Activated CD4-positive, alpha-beta T cell treated with anti-CD3 and anti-CD28 coated beads, Interleukin-2, amount 10 ng/mL, durations not matched to agents 24 days and 14 days (primary cell): ENCODE measurements at regions of chr1 and their contacts with region 1.

Region 1: GRCh38 chr1:26321315-26322041 is 3.7 kb downstream of the CD52 start:
- DNase-seq: peak; percentile 99
- H3K4me3 Mint-ChIP-seq: peak overlapping the region; percentile 82
- H3K27ac Mint-ChIP-seq: peak overlapping the region; percentile 96
- H3K4me1 Mint-ChIP-seq: peaks cover 40% of the 10 kb centered on the region
- H3K27me3 Mint-ChIP-seq: no peaks in the 10 kb centered on the region

Region 2: GRCh38 chr1:26169669-26170471 is 151.6 kb before region 1 on chr1 and contains the start of gene ZNF593:
- intact Hi-C with region 1: loop called (anchors 1 kb)
- DNase-seq: peak; percentile 97
- H3K4me3 Mint-ChIP-seq: peak within 1 kb of the TSS; percentile 96
- H3K27ac Mint-ChIP-seq: peak within 1 kb of the TSS; percentile 92
- H3K4me1 Mint-ChIP-seq: peaks cover 27% of the 10 kb centered on the region
- H3K27me3 Mint-ChIP-seq: peaks cover 9% of the 10 kb centered on the region
- total RNA-seq, gene ZNF593: 84.0 and 87.1 TPM in 2 replicates

Region 3: DNA sequence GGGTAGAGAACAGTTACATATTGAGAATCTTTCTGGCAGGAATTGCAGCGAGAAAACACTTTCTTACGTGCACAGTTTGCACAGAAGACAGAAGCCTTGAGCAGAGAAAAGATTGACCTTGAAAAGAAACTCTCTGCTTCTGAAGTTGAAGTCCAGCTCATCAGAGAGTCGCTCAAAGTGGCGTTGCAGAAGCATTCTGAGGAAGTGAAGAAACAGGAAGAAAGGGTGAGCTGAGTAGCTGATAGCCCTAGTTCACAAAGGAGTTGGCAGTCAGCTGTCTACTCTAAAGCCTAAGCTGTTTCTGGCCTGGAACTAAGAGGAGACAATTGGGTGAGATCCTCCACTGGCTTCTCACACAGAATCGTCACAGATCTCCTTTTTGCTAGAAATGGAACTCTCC is 61.9 kb before region 1 on chr1:
- intact Hi-C with region 1: no loop called
- DNase-seq: no peak
- H3K4me3 Mint-ChIP-seq: no peak overlapping the region
- H3K27ac Mint-ChIP-seq: no peak overlapping the region
- H3K4me1 Mint-ChIP-seq: peaks cover 2% of the 10 kb centered on the region
- H3K27me3 Mint-ChIP-seq: no peaks in the 10 kb centered on the region

Region 4: DNA sequence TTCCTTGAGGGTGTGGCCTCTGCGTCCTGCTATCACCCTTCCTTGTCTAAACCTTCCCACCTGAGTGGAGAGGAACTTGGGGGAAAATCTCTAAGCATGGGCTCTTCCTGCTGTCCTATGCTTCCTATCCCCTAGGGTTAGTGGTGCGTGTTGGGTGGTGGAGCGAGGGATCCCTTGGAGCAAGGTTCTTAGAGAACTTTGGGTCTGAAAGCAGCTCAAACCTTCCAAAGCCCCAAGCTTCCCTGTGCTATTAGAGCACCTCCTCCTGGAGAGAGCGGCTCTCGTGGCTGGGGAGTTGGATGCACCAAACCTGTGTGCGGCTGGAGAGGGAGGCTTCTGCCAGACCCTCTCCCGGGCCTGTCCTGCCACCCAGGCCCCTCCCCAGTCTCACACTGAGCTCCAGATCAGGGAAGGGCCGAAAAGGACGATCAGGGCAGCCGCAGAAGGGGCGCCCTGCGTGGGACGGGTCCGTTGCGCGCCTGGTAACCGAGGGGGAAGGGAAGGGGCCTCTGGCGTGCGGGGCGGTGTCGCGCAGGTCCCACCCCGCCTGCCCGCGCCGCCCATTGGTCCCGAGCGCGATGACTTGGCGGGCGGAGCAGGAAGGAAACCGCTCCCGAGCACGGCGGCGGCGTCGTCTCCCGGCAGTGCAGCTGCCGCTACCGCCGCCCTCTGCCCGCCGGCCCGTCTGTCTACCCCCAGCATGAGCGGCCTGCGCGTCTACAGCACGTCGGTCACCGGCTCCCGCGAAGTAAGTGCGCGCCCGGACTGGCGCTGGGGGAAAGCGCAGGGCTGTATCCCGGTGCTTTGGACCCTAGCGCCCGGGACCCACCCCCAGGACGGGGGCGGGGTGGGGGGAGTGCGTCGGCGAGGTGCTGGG is 41.8 kb before region 1 on chr1 and contains the start of gene SH3BGRL3:
- intact Hi-C with region 1: loop called (anchors 1 kb)
- DNase-seq: peak; percentile 97
- H3K4me3 Mint-ChIP-seq: peak within 1 kb of the TSS; percentile 96
- H3K27ac Mint-ChIP-seq: peak within 1 kb of the TSS; percentile 97
- H3K4me1 Mint-ChIP-seq: peaks cover 74% of the 10 kb centered on the region
- H3K27me3 Mint-ChIP-seq: no peaks in the 10 kb centered on the region
- total RNA-seq, gene SH3BGRL3: 463 and 474 TPM in 2 replicates

Region 5: GRCh38 chr1:26306290-26307229 is 14.9 kb before region 1 on chr1 and contains the start of gene UBXN11:
- intact Hi-C with region 1: loop called (anchors 1 kb)
- DNase-seq: peak; percentile 98
- H3K4me3 Mint-ChIP-seq: peak within 1 kb of the TSS; percentile 98
- H3K27ac Mint-ChIP-seq: peak within 1 kb of the TSS; percentile 93
- H3K4me1 Mint-ChIP-seq: peaks cover 30% of the 10 kb centered on the region
- H3K27me3 Mint-ChIP-seq: no peaks in the 10 kb centered on the region
- total RNA-seq, gene UBXN11: 17.1 and 19.0 TPM in 2 replicates

Region 6: GRCh38 chr1:26378088-26378878 is 56.8 kb after region 1 on chr1:
- intact Hi-C with region 1: no loop called
- DNase-seq: peak; percentile 94
- H3K4me3 Mint-ChIP-seq: peak overlapping the region; percentile 75
- H3K27ac Mint-ChIP-seq: peak overlapping the region; percentile 88
- H3K4me1 Mint-ChIP-seq: peaks cover 57% of the 10 kb centered on the region
- H3K27me3 Mint-ChIP-seq: no peaks in the 10 kb centered on the region

Region 7: GRCh38 chr1:26391450-26391849 is 70.0 kb after region 1 on chr1:
- intact Hi-C with region 1: loop called (anchors 5 kb)
- DNase-seq: peak; percentile 86
- H3K4me3 Mint-ChIP-seq: no peak overlapping the region
- H3K27ac Mint-ChIP-seq: no peak overlapping the region
- H3K4me1 Mint-ChIP-seq: peaks cover 41% of the 10 kb centered on the region
- H3K27me3 Mint-ChIP-seq: peaks cover 4% of the 10 kb centered on the region

Region 8: DNA sequence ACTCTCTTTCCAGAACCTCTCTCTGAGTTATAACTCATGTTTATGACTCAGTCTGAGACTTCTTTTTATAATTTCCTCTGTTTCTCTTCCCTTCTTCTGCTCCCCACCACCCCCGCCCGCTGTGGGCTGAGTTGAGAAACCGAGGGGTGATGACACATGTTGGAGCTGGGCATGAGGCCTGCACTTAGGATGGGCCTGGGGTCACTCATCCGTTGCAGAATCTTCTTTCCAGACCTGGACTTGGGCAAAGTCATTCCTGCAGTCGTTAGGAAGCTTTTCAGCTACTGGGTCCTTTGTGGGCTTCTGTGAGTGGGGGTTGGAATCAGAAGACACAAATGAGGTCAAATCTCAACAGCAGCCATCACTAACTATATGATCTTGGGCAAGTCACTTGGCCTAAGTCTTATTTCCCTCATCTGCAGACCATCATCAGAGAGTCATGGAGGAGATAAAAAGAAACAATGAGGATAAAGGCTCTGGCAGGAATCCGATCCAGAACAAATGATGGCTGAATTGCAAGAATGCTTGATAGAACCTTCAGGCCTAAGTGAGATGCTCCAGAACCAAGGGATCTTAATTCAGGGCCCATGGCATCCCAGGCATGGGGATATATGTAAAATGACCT is 261.5 kb after region 1 on chr1:
- intact Hi-C with region 1: loop called (anchors 2 kb)
- DNase-seq: peak; percentile 79
- H3K4me3 Mint-ChIP-seq: peak overlapping the region; percentile 47
- H3K27ac Mint-ChIP-seq: peak overlapping the region; percentile 92
- H3K4me1 Mint-ChIP-seq: peaks cover 48% of the 10 kb centered on the region
- H3K27me3 Mint-ChIP-seq: peaks cover 2% of the 10 kb centered on the region

Region 9: DNA sequence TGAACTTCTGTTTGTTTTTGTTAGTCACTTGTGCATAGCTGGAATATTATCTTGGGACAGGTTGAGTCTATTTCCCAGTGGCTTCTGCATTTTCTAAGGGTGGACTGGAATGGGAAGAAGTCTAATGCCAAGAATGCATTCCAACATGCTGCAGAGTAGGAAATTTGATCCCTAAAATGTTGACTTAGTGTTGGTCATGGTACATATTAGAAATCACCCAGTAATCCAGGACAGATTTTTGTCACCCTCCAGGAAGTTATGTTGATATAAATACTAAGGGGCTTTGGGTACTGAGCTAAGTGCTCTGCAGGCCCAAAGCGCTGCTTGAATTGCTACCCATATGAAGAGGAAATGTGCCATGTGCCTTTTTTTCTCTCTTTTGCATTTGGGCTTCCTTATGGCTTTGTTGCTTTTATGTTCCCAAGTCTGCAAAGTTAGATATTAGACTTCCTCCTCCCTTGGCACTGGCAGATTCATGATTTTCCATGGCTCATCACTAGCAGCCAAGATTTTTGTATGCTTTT is 384.4 kb after region 1 on chr1:
- intact Hi-C with region 1: no loop called
- DNase-seq: no peak
- H3K4me3 Mint-ChIP-seq: peak overlapping the region; percentile 26
- H3K27ac Mint-ChIP-seq: peak overlapping the region; percentile 66
- H3K4me1 Mint-ChIP-seq: peaks cover 34% of the 10 kb centered on the region
- H3K27me3 Mint-ChIP-seq: no peaks in the 10 kb centered on the region

Region 10: DNA sequence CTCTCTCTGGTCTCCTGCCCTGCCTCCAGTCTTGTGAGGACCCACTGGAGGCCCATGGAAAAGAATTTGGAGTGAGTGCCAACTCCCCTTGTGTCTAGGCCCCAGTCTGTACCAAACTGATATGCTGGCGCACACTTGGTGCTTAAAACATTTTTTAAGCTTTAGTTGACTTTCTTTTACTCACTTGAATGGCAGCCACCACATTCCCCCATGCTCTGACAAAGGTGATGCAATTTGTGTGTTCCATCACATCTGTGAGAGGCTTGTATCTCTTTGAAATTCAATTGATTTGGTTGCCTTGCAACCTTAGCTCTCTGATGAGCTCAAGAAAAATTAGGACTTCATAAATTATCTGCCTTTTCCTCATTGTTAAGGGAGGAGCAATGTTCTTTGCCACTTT is 882.5 kb after region 1 on chr1:
- intact Hi-C with region 1: no loop called
- DNase-seq: no peak
- H3K4me3 Mint-ChIP-seq: no peak overlapping the region
- H3K27ac Mint-ChIP-seq: no peak overlapping the region
- H3K4me1 Mint-ChIP-seq: no peaks in the 10 kb centered on the region
- H3K27me3 Mint-ChIP-seq: peaks cover 3% of the 10 kb centered on the region